CD4-positive, alpha-beta memory T cell (primary cell): ENCODE measurements at regions of chr2 and their contacts with region 1.

Region 1: GRCh38 chr2:64133828-64134227 is 10.4 kb downstream of the PELI1 start:
- DNase-seq: no peak
- H3K4me3 ChIP-seq: no peak overlapping the region
- H3K4me3 Mint-ChIP-seq: no peak overlapping the region
- H3K27ac ChIP-seq: no peak overlapping the region
- H3K27ac Mint-ChIP-seq: peak overlapping the region in 2 of 7 donors; percentile 12 to 62
- H3K4me1 ChIP-seq: peaks cover 78% of the 10 kb centered on the region
- H3K4me1 Mint-ChIP-seq: peaks cover 52 to 79% (median 65%) of the 10 kb centered on the region in 4 donors
- H3K27me3 ChIP-seq: no peaks in the 10 kb centered on the region
- H3K27me3 Mint-ChIP-seq: no peaks in the 10 kb centered on the region

Region 2: GRCh38 chr2:63218800-63219526 is 914.9 kb before region 1 on chr2:
- CTCF ChIA-PET with region 1: no interaction called
- POLR2A ChIA-PET with region 1: no interaction called
- intact Hi-C with region 1: no loop called
- DNase-seq: no peak
- H3K4me3 ChIP-seq: no peak overlapping the region
- H3K4me3 Mint-ChIP-seq: no peak overlapping the region
- H3K27ac ChIP-seq: no peak overlapping the region
- H3K27ac Mint-ChIP-seq: no peak overlapping the region
- H3K4me1 ChIP-seq: no peaks in the 10 kb centered on the region
- H3K4me1 Mint-ChIP-seq: peaks cover 0 to 2% (median 0%) of the 10 kb centered on the region in 4 donors
- H3K27me3 ChIP-seq: no peaks in the 10 kb centered on the region
- H3K27me3 Mint-ChIP-seq: no peaks in the 10 kb centered on the region

Region 3: GRCh38 chr2:63993871-63994270 is 140.0 kb before region 1 on chr2:
- CTCF ChIA-PET with region 1: no interaction called
- POLR2A ChIA-PET with region 1: no interaction called
- intact Hi-C with region 1: no loop called
- DNase-seq: peak in 2 of 5 donors; percentile 24
- H3K4me3 ChIP-seq: no peak overlapping the region
- H3K4me3 Mint-ChIP-seq: peak overlapping the region in 1 of 8 donors; percentile 24
- H3K27ac ChIP-seq: no peak overlapping the region
- H3K27ac Mint-ChIP-seq: peak overlapping the region in 1 of 7 donors; percentile 79
- H3K4me1 ChIP-seq: peaks cover 4% of the 10 kb centered on the region
- H3K4me1 Mint-ChIP-seq: peaks cover 12 to 22% (median 20%) of the 10 kb centered on the region in 4 donors
- H3K27me3 ChIP-seq: no peaks in the 10 kb centered on the region
- H3K27me3 Mint-ChIP-seq: no peaks in the 10 kb centered on the region

Region 4: GRCh38 chr2:64114063-64114911 is 19.5 kb before region 1 on chr2:
- CTCF ChIA-PET with region 1: interaction called, 4 read pairs
- POLR2A ChIA-PET with region 1: interaction called, 3 read pairs
- intact Hi-C with region 1: loop called (anchors 2 kb)
- DNase-seq: peak; percentile 27 to 40 (median 31)
- H3K4me3 ChIP-seq: no peak overlapping the region
- H3K4me3 Mint-ChIP-seq: peak overlapping the region in 7 of 8 donors; percentile 9 to 70 (median 36)
- H3K27ac ChIP-seq: no peak overlapping the region
- H3K27ac Mint-ChIP-seq: peak overlapping the region; percentile 23 to 77 (median 54)
- H3K4me1 ChIP-seq: peaks cover 74% of the 10 kb centered on the region
- H3K4me1 Mint-ChIP-seq: peaks cover 47 to 75% (median 59%) of the 10 kb centered on the region in 4 donors
- H3K27me3 ChIP-seq: no peaks in the 10 kb centered on the region
- H3K27me3 Mint-ChIP-seq: no peaks in the 10 kb centered on the region